Activated CD4-positive, alpha-beta T cell treated with anti-CD3 and anti-CD28 coated beads, Interleukin-2, amount 10 ng/mL, durations not matched to agents 24 days and 14 days (primary cell): ENCODE measurements at regions of chr17 and their contacts with region 1.

Region 1: DNA sequence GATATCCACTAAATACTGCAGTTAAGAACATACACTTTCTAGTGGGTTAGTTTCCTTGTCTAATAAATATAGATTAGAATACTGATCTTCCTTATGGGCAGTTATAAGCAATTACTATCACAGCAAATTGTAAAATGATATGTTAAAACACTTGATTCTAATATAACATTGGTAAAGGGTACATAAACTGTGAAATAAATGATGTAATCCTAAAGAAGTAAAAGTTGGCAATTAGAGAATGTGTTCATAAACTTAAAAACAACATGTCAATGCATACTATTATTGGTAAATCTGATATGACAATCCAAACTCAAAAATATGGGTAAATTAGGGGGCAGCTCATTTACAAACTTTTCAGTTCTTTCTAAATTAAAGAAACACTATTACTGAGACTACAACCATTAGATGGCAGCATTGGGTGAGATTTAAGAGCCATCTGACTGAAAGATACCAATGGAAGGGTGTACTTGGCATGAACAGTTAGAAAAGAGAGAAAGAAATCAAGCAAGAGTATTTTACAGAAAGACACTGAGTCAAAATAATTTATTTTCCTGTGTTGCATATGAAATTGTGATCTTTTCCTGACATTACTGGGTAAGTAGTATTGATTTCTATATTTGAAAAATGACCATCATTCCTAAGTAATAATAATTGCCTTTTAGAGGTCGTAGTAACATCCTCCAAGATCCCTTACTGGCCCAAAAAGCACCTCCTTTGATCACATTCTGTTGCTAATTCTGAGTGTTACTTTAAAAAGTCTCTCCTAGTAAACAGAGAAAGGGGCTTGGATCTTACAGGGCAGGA is 119.6 kb downstream of the SPAG9 start:
- DNase-seq: peak; percentile 83
- H3K4me3 Mint-ChIP-seq: no peak overlapping the region
- H3K27ac Mint-ChIP-seq: peak overlapping the region; percentile 4
- H3K4me1 Mint-ChIP-seq: peaks cover 3% of the 10 kb centered on the region
- H3K27me3 Mint-ChIP-seq: no peaks in the 10 kb centered on the region

Region 2: DNA sequence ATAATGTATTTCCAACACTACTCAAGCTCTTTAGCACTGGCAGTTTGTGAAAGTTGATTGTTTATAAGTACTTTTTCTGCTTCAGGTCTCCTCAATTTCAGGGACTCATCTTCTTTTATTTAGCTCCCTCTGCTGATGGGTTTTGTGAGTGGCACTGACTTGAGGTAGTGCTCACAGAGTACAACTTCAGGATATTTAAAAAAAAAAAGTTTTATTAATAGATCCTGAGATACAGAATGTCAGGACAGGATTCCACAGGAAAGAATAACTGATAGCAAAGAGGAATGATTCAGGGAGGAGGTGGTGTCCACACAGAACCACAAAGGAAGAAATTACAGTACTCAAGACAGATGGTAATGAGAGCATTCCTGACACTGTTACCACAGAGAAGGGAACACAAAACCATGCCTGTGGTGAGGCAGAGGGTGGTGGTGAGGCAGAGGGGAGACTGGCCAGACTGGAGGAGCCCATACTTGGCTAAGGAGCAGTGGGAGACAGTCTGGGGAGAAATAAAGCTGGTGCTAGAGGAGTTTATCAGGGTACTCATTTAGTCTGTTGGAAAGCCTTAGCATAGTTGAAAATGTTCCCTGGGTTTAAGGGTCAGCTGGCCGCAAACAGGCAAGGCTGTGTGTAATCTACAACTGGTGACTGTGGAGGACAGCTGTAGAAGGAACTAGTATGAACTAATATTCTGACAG is 55.9 kb after region 1 on chr17:
- intact Hi-C with region 1: loop called (anchors 1 kb)
- DNase-seq: peak; percentile 81
- H3K4me3 Mint-ChIP-seq: no peak overlapping the region
- H3K27ac Mint-ChIP-seq: no peak overlapping the region
- H3K4me1 Mint-ChIP-seq: peaks cover 3% of the 10 kb centered on the region
- H3K27me3 Mint-ChIP-seq: no peaks in the 10 kb centered on the region

Region 3: GRCh38 chr17:51120739-51121617 is 119.9 kb after region 1 on chr17 and contains the start of gene SPAG9:
- intact Hi-C with region 1: loop called (anchors 1 kb)
- DNase-seq: peak; percentile 98
- H3K4me3 Mint-ChIP-seq: peak within 1 kb of the TSS; percentile 91
- H3K27ac Mint-ChIP-seq: peak within 1 kb of the TSS; percentile 98
- H3K4me1 Mint-ChIP-seq: peaks cover 43% of the 10 kb centered on the region
- H3K27me3 Mint-ChIP-seq: peaks cover 1% of the 10 kb centered on the region
- total RNA-seq, gene SPAG9: 47.5 and 47.7 TPM in 2 replicates

Region 4: DNA sequence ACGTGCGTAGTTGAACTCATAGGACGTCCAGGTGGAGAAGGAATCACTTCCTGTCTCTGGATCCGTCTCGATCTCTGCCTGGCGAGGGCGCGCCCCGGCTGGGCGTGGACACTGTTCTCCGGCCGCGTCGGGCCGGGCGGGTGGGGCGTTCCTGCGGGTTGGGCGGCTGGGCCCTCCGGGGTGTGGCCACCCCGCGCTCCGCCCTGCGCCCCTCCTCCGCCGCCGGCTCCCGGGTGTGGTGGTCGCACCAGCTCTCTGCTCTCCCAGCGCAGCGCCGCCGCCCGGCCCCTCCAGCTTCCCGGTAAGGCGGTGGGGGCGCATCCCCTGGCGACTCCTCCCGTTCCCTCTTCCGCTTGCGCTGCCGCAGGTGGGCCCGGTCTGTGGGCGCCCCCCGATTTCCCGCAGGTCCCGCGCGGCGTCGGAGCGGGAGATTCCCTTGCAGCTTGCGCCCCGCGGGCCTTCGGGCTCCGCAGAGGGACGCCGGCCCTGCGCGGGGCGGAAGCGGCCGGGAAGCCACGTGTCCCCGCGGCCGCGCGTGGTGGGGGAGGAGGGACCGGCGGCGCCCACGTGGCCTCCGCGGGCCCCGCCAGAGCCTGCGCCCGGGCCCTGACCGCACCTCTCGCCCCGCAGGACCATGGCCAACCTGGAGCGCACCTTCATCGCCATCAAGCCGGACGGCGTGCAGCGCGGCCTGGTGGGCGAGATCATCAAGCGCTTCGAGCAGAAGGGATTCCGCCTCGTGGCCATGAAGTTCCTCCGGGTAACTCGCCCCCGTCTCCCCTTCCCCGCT is 165.4 kb after region 1 on chr17 and contains the start of gene NME2:
- intact Hi-C with region 1: loop called (anchors 1 kb)
- DNase-seq: peak; percentile 94
- H3K4me3 Mint-ChIP-seq: peak within 1 kb of the TSS; percentile 88
- H3K27ac Mint-ChIP-seq: peak within 1 kb of the TSS; percentile 97
- H3K4me1 Mint-ChIP-seq: peaks cover 30% of the 10 kb centered on the region
- H3K27me3 Mint-ChIP-seq: no peaks in the 10 kb centered on the region
- total RNA-seq, gene NME2: 752 and 795 TPM in 2 replicates

Region 5: GRCh38 chr17:51260125-51260880 is 259.3 kb after region 1 on chr17 and contains the start of gene UTP18:
- intact Hi-C with region 1: loop called (anchors 2 kb)
- DNase-seq: peak; percentile 98
- H3K4me3 Mint-ChIP-seq: peak within 1 kb of the TSS; percentile 84
- H3K27ac Mint-ChIP-seq: peak within 1 kb of the TSS; percentile 97
- H3K4me1 Mint-ChIP-seq: peaks cover 48% of the 10 kb centered on the region
- H3K27me3 Mint-ChIP-seq: no peaks in the 10 kb centered on the region
- total RNA-seq, gene UTP18: 79.9 and 84.5 TPM in 2 replicates